CD8-positive, alpha-beta memory T cell (primary cell): ENCODE measurements at regions of chr2 and their contacts with region 1.

Region 1: GRCh38 chr2:43131024-43131889 is 95.1 kb downstream of the ZFP36L2 start:
- DNase-seq: peak; percentile 74 to 96 (median 88)
- H3K4me3 ChIP-seq: peak overlapping the region; percentile 60
- H3K4me3 Mint-ChIP-seq: peak overlapping the region; percentile 38 to 85 (median 64)
- H3K27ac ChIP-seq: peak overlapping the region; percentile 84
- H3K27ac Mint-ChIP-seq: peak overlapping the region; percentile 91 to 100 (median 100)
- H3K4me1 ChIP-seq: peaks cover 91% of the 10 kb centered on the region
- H3K4me1 Mint-ChIP-seq: peaks cover 83 to 92% (median 90%) of the 10 kb centered on the region in 3 donors
- H3K27me3 ChIP-seq: no peaks in the 10 kb centered on the region
- H3K27me3 Mint-ChIP-seq: peaks cover 0 to 1% of the 10 kb centered on the region in 2 donors

Region 2: DNA sequence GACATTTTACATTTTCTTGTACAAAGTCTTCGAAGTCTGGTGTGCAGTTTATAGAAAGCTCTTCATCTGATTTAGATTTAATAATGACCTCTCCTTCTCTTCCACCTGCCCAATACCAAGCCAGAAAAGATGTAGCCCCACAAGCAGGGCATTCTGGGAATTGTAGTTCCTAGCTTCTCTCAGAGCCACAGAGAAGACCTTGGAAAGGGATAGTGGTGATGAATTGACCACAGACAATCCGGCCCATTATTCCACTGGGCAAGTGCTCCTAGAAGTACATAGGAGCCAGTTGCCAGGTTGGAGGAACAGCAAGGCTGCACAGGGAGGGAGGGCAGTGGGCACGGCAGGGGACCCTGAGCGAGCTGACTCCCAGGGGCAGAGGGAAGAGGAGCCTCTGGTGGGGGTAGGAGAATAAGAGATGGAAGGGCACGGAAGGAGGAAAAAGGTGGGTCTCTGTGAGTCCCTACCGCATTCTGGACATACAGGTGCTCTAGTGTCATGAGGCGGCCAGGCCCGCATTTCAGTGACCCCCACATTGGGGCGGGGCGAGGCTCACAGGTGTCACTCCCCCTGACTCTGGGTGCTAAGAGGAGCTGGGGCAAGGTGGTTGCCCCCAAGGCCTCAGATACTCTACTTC is 186.4 kb before region 1 on chr2:
- CTCF ChIA-PET with region 1: interaction called, 15 read pairs
- POLR2A ChIA-PET with region 1: no interaction called
- DNase-seq: no peak
- H3K4me3 ChIP-seq: no peak overlapping the region
- H3K4me3 Mint-ChIP-seq: no peak overlapping the region
- H3K27ac ChIP-seq: no peak overlapping the region
- H3K27ac Mint-ChIP-seq: no peak overlapping the region
- H3K4me1 ChIP-seq: no peaks in the 10 kb centered on the region
- H3K4me1 Mint-ChIP-seq: no peaks in the 10 kb centered on the region
- H3K27me3 ChIP-seq: no peaks in the 10 kb centered on the region
- H3K27me3 Mint-ChIP-seq: peaks cover 0 to 2% of the 10 kb centered on the region in 2 donors

Region 3: DNA sequence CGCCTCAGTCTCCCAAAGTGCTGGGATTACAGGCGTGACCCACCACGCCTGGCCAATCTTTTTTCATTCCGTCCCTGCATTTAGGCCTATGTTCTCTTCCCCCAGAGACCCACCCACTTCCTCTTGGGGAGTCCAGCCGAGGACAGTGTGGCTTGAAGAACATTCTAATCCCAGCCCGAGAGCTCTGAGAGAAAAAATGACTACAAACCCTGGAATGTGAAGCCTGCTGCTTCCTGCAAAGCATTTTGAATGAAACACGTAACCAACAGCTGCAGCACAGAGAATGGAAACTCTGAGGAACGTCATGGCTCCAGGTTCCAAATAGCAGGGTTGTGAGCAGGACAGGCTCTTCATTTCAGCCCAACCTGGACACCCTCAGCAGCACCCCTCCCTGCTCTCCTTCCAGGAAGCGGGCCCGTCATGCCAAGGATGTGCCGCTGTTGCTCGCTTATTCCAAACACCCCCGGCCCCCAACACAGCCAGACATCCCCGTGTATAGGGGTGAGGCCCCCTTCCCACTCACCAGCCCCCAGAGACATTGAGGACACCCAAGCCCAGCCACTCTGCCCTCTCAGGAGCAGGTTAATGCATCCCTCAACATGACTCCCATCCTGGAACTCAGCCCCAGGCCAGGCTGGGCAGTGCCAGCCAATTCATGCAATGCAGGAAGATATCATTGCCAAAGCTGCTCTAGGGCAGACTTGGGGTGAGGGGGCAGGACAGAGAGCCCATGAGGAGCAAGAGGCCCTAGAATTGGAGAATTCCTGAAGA is 44.6 kb before region 1 on chr2:
- CTCF ChIA-PET with region 1: no interaction called
- POLR2A ChIA-PET with region 1: no interaction called
- DNase-seq: no peak
- H3K4me3 ChIP-seq: no peak overlapping the region
- H3K4me3 Mint-ChIP-seq: no peak overlapping the region
- H3K27ac ChIP-seq: no peak overlapping the region
- H3K27ac Mint-ChIP-seq: peak overlapping the region in 1 of 8 donors; percentile 93
- H3K4me1 ChIP-seq: peaks cover 5% of the 10 kb centered on the region
- H3K4me1 Mint-ChIP-seq: peaks cover 5 to 10% (median 7%) of the 10 kb centered on the region in 3 donors
- H3K27me3 ChIP-seq: no peaks in the 10 kb centered on the region
- H3K27me3 Mint-ChIP-seq: no peaks in the 10 kb centered on the region

Region 4: GRCh38 chr2:43100883-43101662 is 30.2 kb before region 1 on chr2:
- CTCF ChIA-PET with region 1: no interaction called
- POLR2A ChIA-PET with region 1: no interaction called
- DNase-seq: no peak
- H3K4me3 ChIP-seq: no peak overlapping the region
- H3K4me3 Mint-ChIP-seq: no peak overlapping the region
- H3K27ac ChIP-seq: no peak overlapping the region
- H3K27ac Mint-ChIP-seq: no peak overlapping the region
- H3K4me1 ChIP-seq: no peaks in the 10 kb centered on the region
- H3K4me1 Mint-ChIP-seq: peaks cover 0 to 5% (median 0%) of the 10 kb centered on the region in 3 donors
- H3K27me3 ChIP-seq: no peaks in the 10 kb centered on the region
- H3K27me3 Mint-ChIP-seq: peaks cover 0 to 2% of the 10 kb centered on the region in 2 donors

Region 5: GRCh38 chr2:43149482-43150107 is 18.3 kb after region 1 on chr2:
- CTCF ChIA-PET with region 1: interaction called, 12 read pairs
- POLR2A ChIA-PET with region 1: interaction called, 17 read pairs
- DNase-seq: peak in 1 of 5 donors; percentile 63
- H3K4me3 ChIP-seq: peak overlapping the region; percentile 18
- H3K4me3 Mint-ChIP-seq: peak overlapping the region in 6 of 7 donors; percentile 27 to 80 (median 44)
- H3K27ac ChIP-seq: no peak overlapping the region
- H3K27ac Mint-ChIP-seq: peak overlapping the region; percentile 7 to 95 (median 83)
- H3K4me1 ChIP-seq: peaks cover 62% of the 10 kb centered on the region
- H3K4me1 Mint-ChIP-seq: peaks cover 41 to 71% (median 47%) of the 10 kb centered on the region in 3 donors
- H3K27me3 ChIP-seq: no peaks in the 10 kb centered on the region
- H3K27me3 Mint-ChIP-seq: peaks cover 0 to 3% of the 10 kb centered on the region in 2 donors

Region 6: DNA sequence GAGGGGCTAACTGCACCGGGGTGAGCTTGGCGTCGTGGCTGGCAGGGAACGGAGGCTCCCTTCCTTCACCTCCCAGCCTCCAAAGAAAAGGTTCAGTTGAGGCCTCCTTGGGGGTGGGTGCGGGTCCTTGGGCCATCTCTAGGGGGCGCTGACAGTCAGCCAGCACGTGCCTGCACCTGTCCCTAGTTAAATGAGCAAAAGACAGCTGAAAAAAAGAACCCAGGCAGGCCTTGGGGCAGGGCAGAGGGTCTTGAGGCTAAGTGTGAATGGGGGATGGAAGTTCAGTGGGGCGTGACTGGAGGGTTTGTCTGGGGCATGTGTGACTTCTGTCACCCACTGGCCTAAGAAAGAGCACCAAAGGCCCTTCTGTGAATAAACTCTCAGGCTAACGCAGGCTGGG is 38.7 kb after region 1 on chr2:
- CTCF ChIA-PET with region 1: interaction called, 351 read pairs
- POLR2A ChIA-PET with region 1: interaction called, 31 read pairs
- DNase-seq: peak; percentile 42 to 77 (median 67)
- H3K4me3 ChIP-seq: peak overlapping the region; percentile 57
- H3K4me3 Mint-ChIP-seq: peak overlapping the region; percentile 57 to 94 (median 84)
- H3K27ac ChIP-seq: peak overlapping the region; percentile 53
- H3K27ac Mint-ChIP-seq: peak overlapping the region; percentile 91 to 100 (median 99)
- H3K4me1 ChIP-seq: peaks cover 80% of the 10 kb centered on the region
- H3K4me1 Mint-ChIP-seq: peaks cover 73 to 85% (median 81%) of the 10 kb centered on the region in 3 donors
- H3K27me3 ChIP-seq: no peaks in the 10 kb centered on the region
- H3K27me3 Mint-ChIP-seq: peaks cover 0 to 5% of the 10 kb centered on the region in 2 donors

Region 7: DNA sequence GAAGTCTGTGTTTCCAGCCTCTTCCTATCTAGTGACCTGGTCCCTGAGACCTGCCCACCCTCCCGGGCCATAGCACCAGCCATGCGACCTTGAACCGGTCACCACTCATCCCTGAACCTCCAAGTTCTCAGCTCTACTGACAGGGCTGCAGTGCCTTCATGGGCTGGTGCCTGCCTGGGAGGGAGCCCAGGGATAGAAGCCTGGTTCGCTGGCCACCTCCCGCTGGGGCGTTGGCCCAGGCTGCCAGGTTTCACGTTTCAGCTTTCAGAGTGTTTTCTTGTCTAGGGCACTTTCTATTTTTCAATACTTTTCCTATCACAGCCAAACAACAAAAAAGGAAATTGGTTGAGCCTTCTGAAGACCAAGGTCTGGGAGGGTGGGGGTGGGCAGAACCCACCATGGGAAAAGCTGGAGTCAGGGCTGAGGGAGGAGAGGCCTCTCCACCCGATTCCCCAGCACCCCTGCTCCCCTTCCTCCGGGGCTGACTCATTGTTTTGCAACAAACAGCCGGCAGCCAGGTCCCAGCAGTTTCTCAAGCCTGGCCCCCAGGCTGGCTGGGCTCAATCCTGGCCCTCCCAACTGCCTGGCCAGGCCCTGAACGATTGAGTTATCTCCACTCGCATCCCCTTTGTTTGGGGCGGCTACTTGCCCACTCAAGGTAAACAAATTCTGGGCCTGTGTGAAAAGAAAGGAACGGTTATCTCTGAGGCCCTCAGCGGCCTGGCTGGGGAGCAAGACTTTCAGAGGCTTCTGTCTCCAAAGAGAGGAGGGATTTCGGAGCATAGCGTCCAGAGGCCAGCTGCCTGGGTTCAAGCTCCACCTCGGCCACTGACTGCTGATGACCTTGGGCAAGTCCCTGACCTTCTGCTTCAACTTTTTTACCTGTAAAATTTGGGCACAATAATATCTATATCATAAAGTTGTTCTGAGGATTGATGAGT is 47.6 kb after region 1 on chr2:
- CTCF ChIA-PET with region 1: interaction called, 351 read pairs
- POLR2A ChIA-PET with region 1: interaction called, 31 read pairs
- DNase-seq: no peak
- H3K4me3 ChIP-seq: no peak overlapping the region
- H3K4me3 Mint-ChIP-seq: peak overlapping the region in 2 of 7 donors; percentile 59 to 69
- H3K27ac ChIP-seq: peak overlapping the region; percentile 79
- H3K27ac Mint-ChIP-seq: peak overlapping the region; percentile 90 to 99 (median 92)
- H3K4me1 ChIP-seq: peaks cover 69% of the 10 kb centered on the region
- H3K4me1 Mint-ChIP-seq: peaks cover 69 to 77% (median 73%) of the 10 kb centered on the region in 3 donors
- H3K27me3 ChIP-seq: no peaks in the 10 kb centered on the region
- H3K27me3 Mint-ChIP-seq: peaks cover 0 to 4% of the 10 kb centered on the region in 2 donors

Region 8: DNA sequence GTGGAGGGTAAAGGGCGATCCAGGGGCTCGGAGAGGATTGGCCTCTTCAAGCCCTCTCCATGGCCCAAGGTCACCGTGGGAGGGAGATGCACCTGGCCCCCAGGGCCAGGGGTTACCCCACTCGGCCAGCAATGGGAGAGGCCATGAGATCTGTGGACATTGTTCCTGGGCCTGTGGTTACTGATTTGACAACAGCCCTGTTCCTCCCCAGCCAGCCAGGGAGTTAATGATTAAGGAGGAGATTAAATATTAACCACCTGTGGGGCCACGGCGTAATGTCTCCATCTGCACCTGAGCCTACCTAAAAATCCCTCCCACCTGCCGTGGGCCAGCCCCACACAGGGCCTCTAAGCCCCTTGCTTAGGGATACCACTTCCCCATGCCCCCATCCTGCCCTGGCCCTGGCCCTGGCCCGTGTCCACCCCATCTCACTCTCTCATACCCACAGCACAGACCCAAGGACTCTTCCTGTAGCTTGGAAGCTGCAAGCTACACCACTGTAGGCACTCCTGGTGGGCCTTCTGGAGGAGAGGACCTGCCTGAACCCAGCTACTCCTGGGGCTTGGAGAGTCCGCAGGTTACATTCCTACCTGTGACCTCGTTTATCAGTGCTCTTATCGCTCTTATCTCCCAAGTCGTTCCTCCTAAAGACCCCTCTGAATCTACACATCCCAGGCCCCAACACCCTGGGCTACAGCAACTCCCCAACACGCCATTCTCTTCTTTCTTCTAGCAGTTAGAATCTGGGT is 63.0 kb after region 1 on chr2:
- CTCF ChIA-PET with region 1: interaction called, 14 read pairs
- POLR2A ChIA-PET with region 1: interaction called, 4 read pairs
- DNase-seq: no peak
- H3K4me3 ChIP-seq: peak overlapping the region; percentile 74
- H3K4me3 Mint-ChIP-seq: peak overlapping the region; percentile 71 to 92 (median 85)
- H3K27ac ChIP-seq: peak overlapping the region; percentile 86
- H3K27ac Mint-ChIP-seq: peak overlapping the region; percentile 95 to 100 (median 98)
- H3K4me1 ChIP-seq: peaks cover 84% of the 10 kb centered on the region
- H3K4me1 Mint-ChIP-seq: peaks cover 55 to 76% (median 59%) of the 10 kb centered on the region in 3 donors
- H3K27me3 ChIP-seq: no peaks in the 10 kb centered on the region
- H3K27me3 Mint-ChIP-seq: no peaks in the 10 kb centered on the region

Region 9: DNA sequence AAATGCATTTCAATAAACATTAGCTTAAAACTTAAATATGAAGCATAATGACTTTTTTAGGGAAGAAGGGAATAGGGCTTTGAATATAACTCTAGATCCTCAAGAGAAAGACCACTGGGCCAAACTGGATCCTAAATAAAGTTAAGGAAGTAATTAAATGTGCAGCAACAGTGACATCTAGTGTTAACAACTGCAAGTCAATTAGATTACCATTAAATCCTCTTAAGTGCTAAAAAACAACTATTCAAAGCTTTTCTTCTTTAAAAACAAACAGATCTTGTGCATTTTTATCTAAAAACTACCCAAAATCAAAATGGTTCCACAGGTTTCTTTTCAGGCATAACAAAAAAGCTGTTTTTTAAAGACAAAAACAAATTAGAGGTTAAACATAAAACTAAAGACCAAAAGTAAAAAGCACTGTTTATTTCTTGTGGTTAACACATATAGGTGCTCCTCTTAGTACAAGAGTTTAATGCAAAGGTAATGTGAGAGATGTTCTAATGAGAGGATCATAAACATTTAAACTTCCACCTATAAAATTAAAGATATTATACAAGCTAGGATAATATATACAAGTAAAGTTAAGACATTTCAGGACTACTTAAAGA is 353.2 kb after region 1 on chr2:
- CTCF ChIA-PET with region 1: interaction called, 47 read pairs
- POLR2A ChIA-PET with region 1: interaction called, 5 read pairs
- DNase-seq: peak in 2 of 5 donors; percentile 34 to 48
- H3K4me3 ChIP-seq: no peak overlapping the region
- H3K4me3 Mint-ChIP-seq: peak overlapping the region in 2 of 7 donors; percentile 16 to 23
- H3K27ac ChIP-seq: no peak overlapping the region
- H3K27ac Mint-ChIP-seq: peak overlapping the region in 2 of 8 donors; percentile 70 to 79
- H3K4me1 ChIP-seq: no peaks in the 10 kb centered on the region
- H3K4me1 Mint-ChIP-seq: peaks cover 16 to 29% (median 21%) of the 10 kb centered on the region in 3 donors
- H3K27me3 ChIP-seq: no peaks in the 10 kb centered on the region
- H3K27me3 Mint-ChIP-seq: no peaks in the 10 kb centered on the region

Region 10: GRCh38 chr2:43553341-43553855 is 422.1 kb after region 1 on chr2:
- CTCF ChIA-PET with region 1: no interaction called
- POLR2A ChIA-PET with region 1: no interaction called
- DNase-seq: no peak
- H3K4me3 ChIP-seq: no peak overlapping the region
- H3K4me3 Mint-ChIP-seq: no peak overlapping the region
- H3K27ac ChIP-seq: no peak overlapping the region
- H3K27ac Mint-ChIP-seq: no peak overlapping the region
- H3K4me1 ChIP-seq: no peaks in the 10 kb centered on the region
- H3K4me1 Mint-ChIP-seq: peaks cover 11 to 20% (median 17%) of the 10 kb centered on the region in 3 donors
- H3K27me3 ChIP-seq: no peaks in the 10 kb centered on the region
- H3K27me3 Mint-ChIP-seq: no peaks in the 10 kb centered on the region